ENCODE measurements at regions of chr14 and their contacts with region 1.

Region 1: DNA sequence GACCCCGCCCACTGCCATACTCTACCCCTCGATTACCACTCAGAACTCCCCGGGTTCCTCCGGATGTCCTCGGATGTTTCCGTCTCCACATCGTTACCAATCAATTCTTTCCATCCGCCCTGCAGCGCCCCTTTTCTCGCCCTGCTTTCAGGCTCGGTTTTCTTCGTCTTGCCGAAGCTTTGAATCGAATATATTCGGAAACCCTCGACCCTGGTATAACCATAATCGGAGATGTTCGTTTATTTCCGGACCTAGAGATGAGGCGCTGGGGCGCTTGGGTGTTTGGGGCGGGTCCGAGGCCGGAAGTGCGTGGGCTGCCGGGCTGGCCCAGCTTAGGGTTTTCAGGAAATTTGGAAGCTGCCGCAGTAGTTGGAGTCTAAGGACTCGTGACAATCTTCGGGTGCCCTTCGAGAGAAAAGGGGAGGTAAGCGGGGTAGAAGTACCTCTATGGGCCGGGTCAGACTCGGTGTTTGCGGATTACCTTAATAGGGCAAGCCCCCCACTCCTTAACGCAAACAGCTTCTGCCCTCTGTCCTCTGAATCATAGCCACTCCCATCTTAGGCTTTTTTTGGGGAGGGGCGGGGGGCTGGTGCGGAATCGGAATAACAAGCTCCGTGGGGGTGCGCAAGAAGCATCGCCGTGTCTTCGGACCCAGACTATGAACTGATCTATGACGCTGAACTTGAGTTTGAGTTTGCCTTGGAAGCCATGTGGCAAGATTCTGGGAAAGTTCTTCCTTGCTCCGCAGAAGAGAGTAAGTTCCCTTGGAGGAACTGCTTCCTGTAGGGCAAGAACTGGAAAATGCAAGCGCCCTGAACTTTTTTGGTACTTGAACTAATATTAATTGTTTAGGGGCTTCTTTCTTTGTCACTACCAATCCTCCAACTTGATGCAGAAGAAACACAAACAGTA is at the start of gene C14orf119:
- DNase-seq: peak; percentile 99
- ATAC-seq: peak; percentile 88
- H3K4me3 ChIP-seq: peak within 1 kb of the TSS; percentile 90 to 96
- H3K27ac ChIP-seq: peak within 1 kb of the TSS; percentile 87
- H3K4me1 ChIP-seq: peaks cover 6 to 12% of the 10 kb centered on the region in 2 experiments; a peak in 2 of 4 replicates
- H3K27me3 ChIP-seq: no peaks in the 10 kb centered on the region
- CTCF ChIP-seq: no peak
- POLR2A ChIP-seq: peak; percentile 67
- RAD21 ChIP-seq: no peak
- total RNA-seq, gene C14orf119: 46.8 TPM

Region 2: DNA sequence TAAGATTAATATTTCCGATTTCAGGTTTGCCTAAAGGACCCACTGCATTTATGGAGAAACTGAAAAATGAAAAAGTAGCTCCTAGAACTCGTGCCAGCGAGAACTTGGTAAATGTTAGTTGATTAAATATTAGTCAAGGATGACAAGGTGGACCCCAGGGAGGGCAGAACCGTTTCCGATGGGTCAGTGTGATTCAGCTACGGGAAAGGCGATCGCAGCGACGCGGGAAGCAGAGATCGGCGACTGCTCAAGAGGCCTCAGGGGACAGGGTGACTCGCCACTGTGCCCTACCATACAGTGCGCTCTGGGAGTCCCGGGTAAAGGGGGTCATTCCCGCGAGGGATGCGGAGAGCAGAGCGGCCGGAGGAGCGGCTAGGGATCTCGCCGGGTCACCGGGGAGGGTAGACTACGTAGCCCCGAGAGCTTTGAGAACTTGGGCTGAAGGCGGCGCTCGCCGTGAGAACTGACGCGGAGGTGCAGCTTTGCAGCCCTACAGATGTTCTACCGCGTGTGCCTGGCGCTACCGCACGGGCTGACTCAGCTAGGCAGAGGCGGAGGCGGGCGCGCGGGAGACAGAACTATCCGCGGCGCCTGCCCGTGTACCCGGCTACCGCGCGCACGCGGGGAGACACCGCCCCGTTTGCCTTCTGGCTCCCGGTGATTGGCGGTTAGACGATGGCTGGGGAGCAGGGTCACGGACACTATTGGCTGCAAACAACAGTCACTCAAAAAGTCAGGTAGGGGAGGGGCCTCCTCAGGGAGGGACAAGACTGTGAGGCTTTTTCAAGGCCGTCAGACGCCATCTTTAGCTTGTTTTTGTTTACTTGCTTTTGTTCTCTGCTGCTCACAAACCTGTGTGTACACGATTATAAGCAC is 88.7 kb before region 1 on chr14:
- CTCF ChIA-PET with region 1: no interaction called
- POLR2A ChIA-PET with region 1: interaction called, 11 read pairs
- RAD21 ChIA-PET with region 1: no interaction called
- intact Hi-C with region 1: no loop called
- DNase-seq: peak; percentile 96
- ATAC-seq: peak; percentile 93
- H3K4me3 ChIP-seq: peak overlapping the region; percentile 64 to 71
- H3K27ac ChIP-seq: peak overlapping the region; percentile 97
- H3K4me1 ChIP-seq: peaks cover 23 to 60% of the 10 kb centered on the region in 2 experiments
- H3K27me3 ChIP-seq: no peaks in the 10 kb centered on the region
- CTCF ChIP-seq: no peak; a peak in 1 of 6 replicates
- POLR2A ChIP-seq: peak; percentile 94
- RAD21 ChIP-seq: no peak

Region 3: DNA sequence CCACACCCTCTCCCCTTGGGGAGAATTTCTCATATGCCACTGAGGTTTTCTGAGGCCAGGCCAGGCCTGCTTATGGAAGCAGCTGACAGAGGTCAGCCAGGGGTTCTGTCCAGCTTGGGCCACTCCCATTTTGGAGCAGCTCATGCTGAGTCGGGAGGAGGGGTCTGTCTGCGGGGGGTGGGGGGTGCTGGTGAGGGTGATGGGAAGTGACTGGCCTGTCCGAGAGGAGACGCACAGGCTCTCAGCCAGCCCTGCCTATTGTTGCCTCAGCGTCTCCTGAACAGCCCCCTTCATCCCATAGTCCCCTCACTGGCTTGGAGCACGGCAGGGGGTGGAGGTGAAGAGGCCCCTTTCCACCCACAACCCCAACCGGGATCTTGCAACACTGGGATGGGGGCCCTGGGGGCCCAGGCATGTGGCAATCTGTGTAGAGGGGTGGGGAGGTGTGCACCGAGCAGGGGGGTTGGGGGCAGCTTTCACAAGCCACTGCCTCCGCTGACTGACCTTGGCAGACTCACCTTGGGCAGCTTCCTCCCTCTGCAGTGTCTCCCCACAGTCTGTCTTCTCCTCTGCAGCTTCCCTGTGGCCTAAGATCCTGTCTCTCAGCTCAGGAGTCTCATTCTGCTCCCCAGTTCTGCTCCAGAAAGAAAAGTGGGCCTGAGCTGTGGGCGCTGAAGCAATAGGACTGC is 18.1 kb after region 1 on chr14:
- CTCF ChIA-PET with region 1: interaction called, 13 read pairs
- POLR2A ChIA-PET with region 1: interaction called, 21 read pairs
- RAD21 ChIA-PET with region 1: no interaction called
- intact Hi-C with region 1: no loop called
- DNase-seq: no peak
- ATAC-seq: no peak
- H3K4me3 ChIP-seq: no peak overlapping the region
- H3K27ac ChIP-seq: no peak overlapping the region
- H3K4me1 ChIP-seq: peaks cover 12 to 23% of the 10 kb centered on the region in 2 experiments
- H3K27me3 ChIP-seq: peaks cover 20% of the 10 kb centered on the region; the same call in 1 of the 2 replicates
- CTCF ChIP-seq: no peak
- POLR2A ChIP-seq: no peak
- RAD21 ChIP-seq: no peak

Measured in HCT116 (cell line).